IMR-90 (cell line): ENCODE measurements at regions of chr5 and their contacts with region 1.

Region 1: DNA sequence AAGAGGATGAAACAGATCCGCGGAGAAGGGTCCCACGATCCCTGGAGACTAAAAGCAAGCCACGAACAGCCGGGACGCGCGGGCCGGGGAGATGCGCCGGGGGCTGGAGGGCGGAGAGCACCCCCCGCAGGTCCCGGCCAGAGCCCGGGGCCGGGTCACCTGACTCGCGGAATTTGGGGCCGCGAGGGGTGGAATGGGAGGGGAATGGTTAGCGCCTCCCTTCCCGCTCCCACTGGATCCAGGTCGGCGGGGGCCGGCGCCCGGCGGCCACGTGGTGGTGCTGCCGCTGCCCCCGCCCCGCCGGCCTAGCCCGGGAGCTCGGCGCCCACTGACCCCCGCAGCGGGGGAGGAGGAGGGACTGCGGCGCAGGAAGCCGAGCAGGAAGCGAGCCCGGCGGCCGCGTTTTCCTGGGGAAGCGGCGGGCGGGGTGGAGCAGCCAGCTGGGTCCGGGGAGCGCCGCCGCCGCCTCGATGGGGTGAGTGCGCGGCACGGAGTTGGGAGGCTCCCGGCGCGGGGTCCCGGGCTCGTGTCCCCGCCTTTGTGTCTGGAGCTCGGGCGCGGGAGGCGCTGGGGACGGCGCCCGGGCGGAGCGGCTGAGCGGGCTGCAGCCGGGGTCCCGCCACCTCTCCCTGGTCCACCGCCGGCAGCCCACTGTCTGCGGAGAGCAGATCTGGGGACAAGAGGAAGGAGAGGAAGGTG is at the start of gene RAI14:
- DNase-seq: peak; percentile 85
- ATAC-seq: peak; percentile 78
- H3K4me3 ChIP-seq: peak within 1 kb of the TSS; percentile 99
- H3K27ac ChIP-seq: peak within 1 kb of the TSS; percentile 100
- H3K4me1 ChIP-seq: peaks cover 14% of the 10 kb centered on the region
- H3K27me3 ChIP-seq: no peaks in the 10 kb centered on the region
- CTCF ChIP-seq: peak; percentile 21; the same call in 1 of the 2 replicates
- POLR2A ChIP-seq: peak; percentile 72
- RAD21 ChIP-seq: peak; percentile 12; the same call in 1 of the 2 replicates
- total RNA-seq, gene RAI14: 267 and 361 TPM in 2 replicates

Region 2: GRCh38 chr5:34522599-34523386 is 133.4 kb before region 1 on chr5:
- CTCF ChIA-PET with region 1: interaction called, 3 read pairs
- POLR2A ChIA-PET with region 1: no interaction called
- dilution Hi-C with region 1: no loop called
- in situ Hi-C with region 1: loop called (anchors 5 kb)
- intact Hi-C with region 1: loop called (anchors 1 kb)
- DNase-seq: peak; percentile 92
- ATAC-seq: peak; percentile 84
- H3K4me3 ChIP-seq: no peak overlapping the region
- H3K27ac ChIP-seq: peak overlapping the region; percentile 58; the same call in 1 of the 2 replicates
- H3K4me1 ChIP-seq: peaks cover 14% of the 10 kb centered on the region
- H3K27me3 ChIP-seq: no peaks in the 10 kb centered on the region
- CTCF ChIP-seq: peak; percentile 76
- POLR2A ChIP-seq: 0 out of 2 replicates have a peak, but pooled peaks have one; percentile 29
- RAD21 ChIP-seq: peak; percentile 91

Region 3: GRCh38 chr5:34587355-34588241 is 68.6 kb before region 1 on chr5:
- CTCF ChIA-PET with region 1: interaction called, 3 read pairs
- POLR2A ChIA-PET with region 1: interaction called, 4 read pairs
- dilution Hi-C with region 1: no loop called
- in situ Hi-C with region 1: no loop called
- intact Hi-C with region 1: loop called (anchors 1 kb)
- DNase-seq: peak; percentile 90
- ATAC-seq: peak; percentile 64
- H3K4me3 ChIP-seq: peak overlapping the region; percentile 15; the same call in 1 of the 2 replicates
- H3K27ac ChIP-seq: peak overlapping the region; percentile 100
- H3K4me1 ChIP-seq: peaks cover 23% of the 10 kb centered on the region
- H3K27me3 ChIP-seq: no peaks in the 10 kb centered on the region
- CTCF ChIP-seq: no peak
- POLR2A ChIP-seq: peak; percentile 56; the same call in 1 of the 2 replicates
- RAD21 ChIP-seq: no peak

Region 4: DNA sequence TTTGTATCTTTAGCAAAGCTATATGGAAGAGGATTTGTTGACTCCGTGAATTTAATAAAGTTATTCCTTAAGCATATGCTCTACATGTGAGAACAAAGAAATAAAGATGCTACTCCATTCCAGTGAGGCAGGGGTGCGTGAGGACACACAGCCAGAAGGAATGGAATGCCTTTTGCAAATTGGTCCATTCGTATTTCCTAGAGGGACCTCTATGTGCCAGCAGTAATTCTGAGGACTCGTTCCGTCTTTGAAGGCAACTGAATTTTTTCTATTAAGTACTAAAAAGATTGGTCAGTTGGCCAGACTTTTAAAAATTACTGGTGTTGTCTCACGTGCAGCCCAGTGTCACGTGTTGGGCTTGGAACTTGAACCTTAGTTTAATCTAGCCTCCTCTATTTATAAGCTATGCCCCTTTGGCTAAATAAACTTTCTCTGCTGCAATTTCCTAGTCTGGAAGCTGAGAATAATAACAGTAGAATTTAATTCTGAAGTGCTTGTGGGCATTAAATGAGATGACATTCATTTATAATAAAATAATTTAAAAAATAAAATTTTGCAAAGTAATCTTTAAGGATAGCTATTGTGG is 13.9 kb after region 1 on chr5:
- CTCF ChIA-PET with region 1: no interaction called
- POLR2A ChIA-PET with region 1: no interaction called
- dilution Hi-C with region 1: no loop called
- in situ Hi-C with region 1: no loop called
- intact Hi-C with region 1: loop called (anchors 1 kb)
- DNase-seq: peak; percentile 48
- ATAC-seq: peak; percentile 13; the same call in 1 of the 2 replicates
- H3K4me3 ChIP-seq: no peak overlapping the region
- H3K27ac ChIP-seq: peak overlapping the region; percentile 71; the same call in 1 of the 2 replicates
- H3K4me1 ChIP-seq: peaks cover 37% of the 10 kb centered on the region
- H3K27me3 ChIP-seq: no peaks in the 10 kb centered on the region
- CTCF ChIP-seq: no peak
- POLR2A ChIP-seq: no peak
- RAD21 ChIP-seq: no peak

Region 5: DNA sequence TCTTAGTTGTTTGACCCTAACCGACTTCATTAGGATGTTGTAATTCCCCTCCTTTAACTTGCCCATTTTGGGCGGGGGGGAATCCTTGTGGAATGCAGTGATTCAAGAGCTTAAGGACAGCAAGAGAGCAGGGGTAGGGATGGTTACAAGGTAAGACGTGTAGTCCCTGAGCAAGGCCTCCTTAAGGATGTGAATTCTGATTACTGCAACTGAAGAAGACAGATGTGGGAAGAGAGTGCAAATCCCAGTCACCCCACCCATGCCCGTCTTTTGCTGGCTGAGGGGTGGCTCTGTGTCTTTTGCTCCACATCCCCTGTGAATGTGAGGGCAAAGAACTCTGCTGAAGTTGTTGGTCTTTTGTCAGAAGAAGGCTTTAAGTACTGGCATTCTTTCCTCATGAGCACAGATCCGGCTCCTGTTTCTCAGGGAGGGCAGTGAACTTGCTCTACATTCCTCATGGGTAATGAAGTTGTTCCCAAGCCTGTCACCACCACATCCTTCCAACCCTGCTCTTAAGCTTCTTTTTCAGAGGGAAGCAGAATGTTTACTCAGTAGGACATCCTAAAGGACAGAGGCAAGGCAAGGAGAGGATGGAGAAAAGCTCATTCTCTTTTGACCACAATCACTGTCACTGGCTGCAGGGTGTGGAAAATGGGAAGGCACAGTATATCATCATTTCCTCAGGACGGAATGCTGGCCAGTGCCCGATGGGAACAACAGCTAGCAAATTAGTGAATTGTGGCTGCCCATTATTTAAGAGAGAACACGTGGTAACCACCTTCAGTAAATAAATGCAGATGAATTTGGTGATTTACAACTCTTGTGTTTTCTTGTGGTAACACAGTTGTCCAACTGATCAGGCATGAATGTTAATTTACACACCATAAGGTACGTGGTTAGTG is 61.5 kb after region 1 on chr5:
- CTCF ChIA-PET with region 1: no interaction called
- POLR2A ChIA-PET with region 1: no interaction called
- dilution Hi-C with region 1: no loop called
- in situ Hi-C with region 1: no loop called
- intact Hi-C with region 1: loop called (anchors 2 kb)
- DNase-seq: peak; percentile 99
- ATAC-seq: peak; percentile 82
- H3K4me3 ChIP-seq: no peak overlapping the region
- H3K27ac ChIP-seq: peak overlapping the region; percentile 67
- H3K4me1 ChIP-seq: peaks cover 37% of the 10 kb centered on the region
- H3K27me3 ChIP-seq: no peaks in the 10 kb centered on the region
- CTCF ChIP-seq: no peak
- POLR2A ChIP-seq: peak; percentile 43; the same call in 1 of the 2 replicates
- RAD21 ChIP-seq: no peak; the same call in none of the 2 replicates

Region 6: DNA sequence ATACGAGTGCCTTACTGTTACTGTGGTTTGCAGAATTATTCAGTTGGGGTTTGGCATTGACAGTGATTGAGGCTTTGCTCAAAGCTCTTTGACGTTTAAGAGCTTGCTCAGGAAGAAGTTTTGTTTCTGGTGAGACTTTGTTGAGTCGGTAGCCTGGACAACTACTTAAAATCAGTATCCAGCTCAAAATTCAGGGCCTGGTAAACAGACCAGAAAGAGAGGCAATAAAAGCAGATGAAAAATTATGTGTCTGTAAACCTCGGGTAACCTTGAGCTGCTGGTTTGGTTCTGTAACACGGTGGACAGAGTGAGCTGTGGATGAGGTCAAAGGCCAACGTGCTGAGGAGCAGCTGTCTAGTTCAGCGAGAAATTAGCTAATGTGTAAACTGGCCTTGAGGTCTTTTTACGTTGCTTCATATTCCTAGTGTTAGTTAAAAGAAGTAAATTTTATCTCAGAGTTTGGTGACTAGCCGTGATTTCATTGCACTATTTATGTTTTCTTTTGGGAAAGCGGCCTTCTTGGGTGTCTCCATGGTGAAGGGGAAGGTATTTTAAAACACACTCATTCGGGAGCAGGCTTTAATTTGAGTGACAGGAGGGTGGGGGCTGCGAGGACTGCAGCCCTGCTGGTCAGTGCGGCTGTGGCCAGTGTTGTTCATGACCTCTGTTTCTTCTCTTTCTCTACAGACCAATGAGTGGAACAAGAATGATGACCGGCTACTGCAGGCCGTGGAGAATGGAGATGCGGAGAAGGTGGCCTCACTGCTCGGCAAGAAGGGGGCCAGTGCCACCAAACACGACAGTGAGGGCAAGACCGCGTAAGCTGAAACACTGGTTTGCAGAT is 100.9 kb after region 1 on chr5:
- CTCF ChIA-PET with region 1: no interaction called
- POLR2A ChIA-PET with region 1: no interaction called
- dilution Hi-C with region 1: no loop called
- in situ Hi-C with region 1: no loop called
- intact Hi-C with region 1: loop called (anchors 5 kb)
- DNase-seq: no peak
- ATAC-seq: no peak; the same call in 1 of the 2 replicates
- H3K4me3 ChIP-seq: no peak overlapping the region
- H3K27ac ChIP-seq: peak overlapping the region; percentile 38; the same call in 1 of the 2 replicates
- H3K4me1 ChIP-seq: peaks cover 16% of the 10 kb centered on the region
- H3K27me3 ChIP-seq: no peaks in the 10 kb centered on the region
- CTCF ChIP-seq: no peak
- POLR2A ChIP-seq: no peak
- RAD21 ChIP-seq: no peak

Region 7: DNA sequence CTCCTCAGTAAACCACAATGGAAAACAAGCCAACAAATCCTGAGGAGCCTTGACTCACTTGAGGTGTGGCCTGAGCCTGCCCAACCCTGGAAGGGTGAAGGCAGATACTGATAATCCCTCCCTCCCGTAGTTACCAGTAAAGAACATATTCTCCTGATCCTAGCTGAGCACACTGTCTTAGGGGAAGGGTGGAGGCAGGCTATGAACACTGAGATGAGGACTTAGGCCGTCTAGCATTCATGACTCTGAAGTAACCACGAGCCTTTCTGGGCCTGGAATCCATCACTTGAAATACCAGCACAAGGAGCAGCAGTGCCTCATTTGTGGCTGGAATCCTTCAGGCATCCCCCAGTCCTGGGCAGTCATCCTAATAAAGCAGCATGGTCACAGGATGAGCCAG is 698.6 kb after region 1 on chr5:
- CTCF ChIA-PET with region 1: no interaction called
- POLR2A ChIA-PET with region 1: no interaction called
- dilution Hi-C with region 1: no loop called
- in situ Hi-C with region 1: no loop called
- intact Hi-C with region 1: no loop called
- DNase-seq: no peak
- ATAC-seq: no peak
- H3K4me3 ChIP-seq: no peak overlapping the region
- H3K27ac ChIP-seq: no peak overlapping the region
- H3K4me1 ChIP-seq: no peaks in the 10 kb centered on the region
- H3K27me3 ChIP-seq: no peaks in the 10 kb centered on the region
- CTCF ChIP-seq: no peak
- POLR2A ChIP-seq: no peak
- RAD21 ChIP-seq: no peak

Region 8: GRCh38 chr5:35753490-35753889 is 1097.3 kb after region 1 on chr5:
- CTCF ChIA-PET with region 1: no interaction called
- POLR2A ChIA-PET with region 1: no interaction called
- dilution Hi-C with region 1: no loop called
- in situ Hi-C with region 1: no loop called
- intact Hi-C with region 1: no loop called
- DNase-seq: no peak
- ATAC-seq: no peak
- H3K4me3 ChIP-seq: no peak overlapping the region
- H3K27ac ChIP-seq: no peak overlapping the region
- H3K4me1 ChIP-seq: no peaks in the 10 kb centered on the region
- H3K27me3 ChIP-seq: no peaks in the 10 kb centered on the region
- CTCF ChIP-seq: no peak
- POLR2A ChIP-seq: no peak
- RAD21 ChIP-seq: no peak